ENCODE measurements at regions of chr4 and their contacts with region 1.

Region 1: DNA sequence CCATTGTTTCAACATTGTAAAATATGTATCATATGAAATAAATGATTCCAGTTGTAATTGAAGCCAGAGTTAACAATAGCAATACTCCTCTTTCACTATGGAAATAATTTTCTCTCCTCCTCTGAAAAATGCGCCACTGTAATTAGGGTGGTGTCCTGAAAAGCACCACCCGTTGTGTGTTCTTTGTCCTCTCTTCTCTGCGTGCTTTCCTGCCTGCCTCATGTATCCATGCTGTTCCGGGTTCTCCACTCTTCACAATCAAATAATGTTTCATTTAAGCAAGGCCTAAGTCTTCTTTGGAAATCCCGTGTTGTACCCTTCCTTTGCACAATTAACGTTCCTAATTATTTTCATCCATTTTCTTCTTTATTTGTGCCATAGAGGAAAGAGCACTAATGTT is 293.3 kb downstream of the ADGRL3 start:
- DNase-seq: no peak
- ATAC-seq: no peak
- H3K4me3 ChIP-seq: no peak overlapping the region
- H3K27ac ChIP-seq: no peak overlapping the region
- H3K4me1 ChIP-seq: no peaks in the 10 kb centered on the region
- H3K27me3 ChIP-seq: no peaks in the 10 kb centered on the region
- CTCF ChIP-seq: no peak
- POLR2A ChIP-seq: no peak

Region 2: DNA sequence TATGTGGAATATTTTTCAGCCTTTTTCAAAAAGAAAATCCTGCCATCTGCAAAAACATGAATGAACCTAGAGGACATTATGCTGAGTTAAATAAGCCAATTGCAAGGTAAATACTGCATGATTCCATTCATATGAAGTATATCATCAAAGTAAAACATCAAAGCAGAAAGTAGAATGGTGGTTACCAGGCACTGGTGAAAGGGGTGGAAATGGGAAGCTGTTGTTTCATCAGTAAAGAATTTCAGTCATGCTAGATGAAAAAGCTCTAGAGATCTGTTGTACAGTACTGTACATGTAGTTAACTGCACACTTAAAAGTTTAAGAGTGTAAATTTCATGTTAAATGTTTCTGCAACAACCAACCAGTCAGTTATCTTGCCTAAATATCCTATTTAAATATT is 490.2 kb before region 1 on chr4:
- in situ Hi-C with region 1: no loop called
- intact Hi-C with region 1: no loop called
- DNase-seq: no peak
- ATAC-seq: no peak
- H3K4me3 ChIP-seq: no peak overlapping the region
- H3K27ac ChIP-seq: no peak overlapping the region
- H3K4me1 ChIP-seq: no peaks in the 10 kb centered on the region
- H3K27me3 ChIP-seq: no peaks in the 10 kb centered on the region
- CTCF ChIP-seq: no peak
- POLR2A ChIP-seq: no peak

Region 3: GRCh38 chr4:61246034-61246433 is 247.4 kb before region 1 on chr4:
- in situ Hi-C with region 1: no loop called
- intact Hi-C with region 1: no loop called
- DNase-seq: no peak
- ATAC-seq: no peak
- H3K4me3 ChIP-seq: no peak overlapping the region
- H3K27ac ChIP-seq: no peak overlapping the region
- H3K4me1 ChIP-seq: no peaks in the 10 kb centered on the region
- H3K27me3 ChIP-seq: no peaks in the 10 kb centered on the region
- CTCF ChIP-seq: no peak
- POLR2A ChIP-seq: no peak

Region 4: DNA sequence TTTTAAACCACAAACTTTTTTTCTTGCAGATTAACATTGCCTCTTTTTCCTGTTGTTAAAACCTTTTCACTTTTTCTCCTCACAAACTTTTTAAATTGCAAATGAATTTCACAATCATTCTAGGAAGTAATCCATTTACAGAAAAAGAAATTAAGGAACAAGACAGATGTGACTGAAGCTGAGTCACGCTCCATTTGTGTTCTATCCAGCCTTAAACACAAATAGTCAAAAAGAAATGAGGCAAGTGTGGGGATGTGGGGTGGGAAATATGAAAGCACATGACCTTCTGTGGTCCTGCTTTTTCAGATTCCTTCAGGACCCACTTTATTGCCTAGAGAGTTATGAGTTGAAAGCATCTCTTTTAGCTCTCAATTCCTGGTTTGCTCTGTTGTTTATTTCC is 96.3 kb before region 1 on chr4:
- in situ Hi-C with region 1: loop called in 1 of 4 experiments (anchors 25 kb)
- intact Hi-C with region 1: no loop called
- DNase-seq: no peak
- ATAC-seq: no peak
- H3K4me3 ChIP-seq: no peak overlapping the region
- H3K27ac ChIP-seq: no peak overlapping the region
- H3K4me1 ChIP-seq: no peaks in the 10 kb centered on the region
- H3K27me3 ChIP-seq: no peaks in the 10 kb centered on the region
- CTCF ChIP-seq: no peak
- POLR2A ChIP-seq: no peak

Region 5: DNA sequence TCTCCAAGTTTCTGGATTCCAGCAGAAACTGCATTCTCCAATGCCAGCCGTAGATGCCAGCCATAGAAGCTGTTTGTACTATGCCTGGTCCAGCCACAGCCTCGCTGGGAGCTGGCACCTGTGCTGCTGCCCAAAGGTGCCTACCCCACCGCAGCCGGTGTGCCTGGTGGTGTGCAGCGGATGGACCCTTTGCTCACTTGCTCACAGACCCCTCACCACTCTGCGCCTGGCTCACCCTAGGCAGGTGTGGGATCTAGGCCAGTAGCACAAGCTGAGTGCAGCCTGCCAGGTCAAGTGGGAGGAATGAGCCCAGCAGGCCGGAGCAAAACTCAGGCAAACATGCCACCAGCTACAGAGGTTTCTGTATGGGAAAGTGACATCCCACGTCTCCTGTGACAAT is 169.8 kb after region 1 on chr4:
- in situ Hi-C with region 1: no loop called
- intact Hi-C with region 1: no loop called
- DNase-seq: no peak
- ATAC-seq: no peak
- H3K4me3 ChIP-seq: no peak overlapping the region
- H3K27ac ChIP-seq: no peak overlapping the region
- H3K4me1 ChIP-seq: no peaks in the 10 kb centered on the region
- H3K27me3 ChIP-seq: no peaks in the 10 kb centered on the region
- CTCF ChIP-seq: no peak
- POLR2A ChIP-seq: no peak

Region 6: DNA sequence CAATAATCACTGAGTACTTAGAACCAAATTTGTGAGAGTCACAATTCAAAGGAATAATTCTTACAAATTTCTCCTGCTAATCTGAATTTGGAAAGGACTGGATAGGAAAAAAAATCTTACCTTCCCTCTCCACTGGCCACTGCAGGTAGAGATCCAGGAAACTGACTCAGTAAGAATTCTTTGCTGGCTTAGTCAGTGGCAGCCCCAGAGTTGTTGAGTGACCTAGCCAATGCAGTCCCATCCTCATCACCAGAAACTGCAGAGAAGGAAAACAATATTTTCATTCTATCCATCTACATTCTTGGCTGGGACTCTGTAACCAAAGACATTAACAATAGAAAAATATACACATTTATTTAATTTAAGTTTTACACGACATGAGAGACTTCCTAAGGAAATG is 278.7 kb after region 1 on chr4:
- in situ Hi-C with region 1: no loop called
- intact Hi-C with region 1: no loop called
- DNase-seq: no peak
- ATAC-seq: no peak
- H3K4me3 ChIP-seq: no peak overlapping the region
- H3K27ac ChIP-seq: no peak overlapping the region
- H3K4me1 ChIP-seq: no peaks in the 10 kb centered on the region
- H3K27me3 ChIP-seq: no peaks in the 10 kb centered on the region
- CTCF ChIP-seq: no peak
- POLR2A ChIP-seq: no peak

Measured in gastrocnemius medialis (tissue), 4 donors.